HEK293 (cell line): ENCODE measurements at regions of chr1 and their contacts with region 1.

Region 1: GRCh38 chr1:6475381-6476133 is 9.6 kb upstream of the TNFRSF25 start:
- H3K4me3 ChIP-seq: no peak overlapping the region
- H3K27ac ChIP-seq: no peak overlapping the region
- H3K4me1 ChIP-seq: no peaks in the 10 kb centered on the region
- CTCF ChIP-seq: peak; percentile 84

Region 2: DNA sequence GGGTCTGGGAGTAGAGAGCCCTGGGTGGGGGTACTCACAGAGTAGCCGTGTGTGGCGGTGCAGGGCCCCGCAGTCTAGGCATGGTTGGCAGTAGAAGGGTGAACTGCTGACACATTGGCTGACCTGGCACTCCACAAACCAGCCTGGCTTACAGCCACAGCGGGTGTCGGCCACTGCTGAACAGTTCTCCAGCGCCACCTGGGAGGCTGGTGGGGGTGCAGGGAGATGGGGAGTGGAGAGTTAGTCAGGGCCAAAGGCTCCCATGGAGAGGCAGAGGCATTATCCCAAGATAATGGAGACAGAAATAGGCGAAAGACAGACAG is 11.1 kb before region 1 on chr1:
- CTCF ChIA-PET with region 1: interaction called, 10 read pairs
- POLR2A ChIA-PET with region 1: no interaction called
- H3K4me3 ChIP-seq: no peak overlapping the region
- H3K27ac ChIP-seq: no peak overlapping the region
- H3K4me1 ChIP-seq: no peaks in the 10 kb centered on the region
- CTCF ChIP-seq: peak; percentile 27

Region 3: GRCh38 chr1:6489799-6490180 is 14.2 kb after region 1 on chr1:
- CTCF ChIA-PET with region 1: interaction called, 19 read pairs
- POLR2A ChIA-PET with region 1: no interaction called
- H3K4me3 ChIP-seq: peak overlapping the region; percentile 72
- H3K27ac ChIP-seq: peak overlapping the region; percentile 67; the same call in 1 of the 2 replicates
- H3K4me1 ChIP-seq: no peaks in the 10 kb centered on the region
- CTCF ChIP-seq: peak; percentile 89

Region 4: GRCh38 chr1:6509919-6510291 is 34.3 kb after region 1 on chr1:
- CTCF ChIA-PET with region 1: no interaction called
- POLR2A ChIA-PET with region 1: no interaction called
- H3K4me3 ChIP-seq: no peak overlapping the region
- H3K27ac ChIP-seq: no peak overlapping the region
- H3K4me1 ChIP-seq: no peaks in the 10 kb centered on the region
- CTCF ChIP-seq: no peak

Region 5: DNA sequence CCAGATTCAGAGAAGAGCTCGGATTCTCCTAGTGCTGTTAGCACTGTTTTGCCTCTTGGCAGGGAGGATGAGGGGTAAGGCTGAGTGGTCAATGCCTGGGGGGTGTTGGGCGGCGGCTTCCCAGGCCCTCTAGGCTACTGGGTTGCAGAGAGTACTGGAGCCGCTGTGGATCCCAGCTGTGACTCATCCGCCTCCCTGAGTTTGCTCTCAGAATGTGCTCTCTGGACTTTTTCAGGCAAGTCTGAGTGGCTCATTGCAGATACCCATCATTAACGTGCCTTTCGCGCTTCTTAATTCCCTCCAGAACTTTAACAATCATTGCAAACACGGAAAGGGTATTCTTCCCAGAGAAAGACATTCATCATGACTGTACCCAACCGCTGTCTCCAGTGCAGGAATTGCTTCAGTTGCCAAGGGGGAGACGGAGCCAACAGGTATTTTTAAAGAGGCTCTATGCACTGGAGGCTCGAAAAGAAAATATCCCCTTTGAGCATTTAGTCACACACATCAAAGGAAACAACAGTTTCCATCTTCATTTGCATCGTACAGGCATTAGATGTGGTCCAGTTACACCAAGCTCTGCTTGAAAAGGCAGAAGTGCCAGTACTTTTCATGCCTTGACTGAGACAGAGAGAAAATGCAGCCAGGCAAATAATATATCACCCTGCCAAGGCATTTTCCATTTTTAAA is 295.3 kb after region 1 on chr1:
- CTCF ChIA-PET with region 1: no interaction called
- POLR2A ChIA-PET with region 1: no interaction called
- H3K4me3 ChIP-seq: no peak overlapping the region
- H3K27ac ChIP-seq: no peak overlapping the region
- H3K4me1 ChIP-seq: no peaks in the 10 kb centered on the region
- CTCF ChIP-seq: no peak